Prostate gland (tissue), 2 donors: ENCODE measurements at regions of chr9 and their contacts with region 1.

Region 1: DNA sequence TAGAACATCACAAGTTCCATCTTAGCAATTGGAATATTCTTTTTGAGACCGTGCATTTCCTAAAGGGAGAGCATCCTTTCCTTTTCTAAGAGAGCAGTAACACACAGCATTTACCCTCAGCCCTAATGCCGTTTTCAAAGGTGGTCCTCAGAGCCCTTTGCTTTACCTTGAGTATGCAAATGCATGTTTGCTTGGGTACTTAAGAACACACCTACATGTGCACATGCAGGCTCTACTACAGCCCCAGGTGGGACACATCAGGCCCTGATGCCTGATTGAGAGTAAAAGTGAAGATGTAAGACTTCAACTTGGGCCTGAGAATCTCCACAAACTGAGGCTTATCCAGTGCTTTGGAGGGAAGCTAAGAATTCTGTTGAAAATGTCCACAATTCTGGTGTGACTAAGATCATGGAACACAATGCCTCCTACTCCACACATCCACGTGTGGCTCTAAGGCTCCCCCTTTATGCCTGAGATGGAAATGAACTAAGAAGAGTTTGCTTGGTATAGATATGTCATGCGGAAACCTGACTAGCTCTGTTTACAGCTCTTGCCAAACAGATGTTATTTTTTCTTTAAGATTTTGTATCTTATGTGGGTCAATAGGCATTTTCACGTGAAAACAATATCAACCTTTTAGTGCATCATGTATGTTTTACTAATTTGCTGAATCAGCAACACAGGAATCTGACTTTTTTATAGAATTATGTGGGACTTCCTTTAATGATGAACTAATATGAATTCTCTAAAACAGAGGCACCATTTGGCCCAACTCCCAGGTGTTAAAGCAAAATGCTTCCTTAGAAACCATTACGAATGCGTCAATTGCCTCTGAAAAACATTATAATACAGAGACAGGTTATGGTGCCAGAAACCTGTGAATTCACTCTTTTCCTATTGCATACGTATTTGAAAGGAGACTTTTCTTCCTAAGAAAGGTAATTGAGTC is 48.9 kb upstream of the SLC2A8 start:
- DNase-seq: no peak
- H3K4me3 ChIP-seq: no peak overlapping the region
- H3K27ac ChIP-seq: no peak overlapping the region
- H3K4me1 ChIP-seq: no peaks in the 10 kb centered on the region
- H3K27me3 ChIP-seq: no peaks in the 10 kb centered on the region
- CTCF ChIP-seq: peak in 3 of 4 experiments; percentile 12 to 64 (median 39)
- POLR2A ChIP-seq: no peak

Region 2: DNA sequence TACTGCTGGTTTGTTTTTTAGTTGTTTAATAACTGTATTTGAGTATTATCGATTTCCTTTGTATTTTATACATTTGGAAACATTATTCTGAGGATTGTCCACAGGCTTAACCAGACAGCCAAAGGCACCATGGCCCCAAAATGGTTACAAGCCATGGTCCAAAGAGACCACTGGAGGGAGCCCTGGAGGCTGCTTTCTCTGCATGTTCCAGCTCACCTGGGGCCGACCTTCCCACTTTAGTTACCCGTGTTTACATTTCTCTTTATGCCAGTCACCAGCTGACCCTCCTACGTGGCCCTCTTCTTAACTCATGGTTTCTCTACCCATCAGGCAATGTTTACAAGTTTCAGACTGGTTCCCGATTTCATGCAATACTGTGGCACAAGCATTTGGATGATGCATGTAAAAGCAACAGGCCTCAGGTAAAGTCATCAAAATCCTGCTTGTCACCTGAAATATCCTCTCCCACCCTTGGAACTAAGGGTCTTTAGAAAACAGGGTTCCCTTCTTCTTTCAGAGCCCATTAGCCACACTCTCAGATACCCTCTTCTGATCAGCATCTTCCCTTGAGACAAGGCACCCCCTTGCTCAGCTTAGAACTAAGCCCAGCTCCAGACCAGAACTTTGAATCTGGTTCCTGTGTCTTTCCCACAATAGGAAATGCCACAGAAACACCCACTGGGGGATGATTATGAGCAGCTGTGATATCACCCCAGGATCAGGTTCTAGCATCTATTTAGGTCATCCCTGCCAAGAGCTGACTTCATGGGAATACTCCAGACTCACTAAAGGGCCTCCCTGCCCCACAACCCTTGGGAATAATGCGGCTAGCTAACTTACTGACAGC is 133.5 kb before region 1 on chr9:
- intact Hi-C with region 1: loop called (anchors 5 kb)
- DNase-seq: peak; percentile 71
- H3K4me3 ChIP-seq: no peak overlapping the region
- H3K27ac ChIP-seq: no peak overlapping the region
- H3K4me1 ChIP-seq: no peaks in the 10 kb centered on the region
- H3K27me3 ChIP-seq: no peaks in the 10 kb centered on the region
- CTCF ChIP-seq: peak in 3 of 4 experiments; percentile 67 to 85 (median 84)
- POLR2A ChIP-seq: no peak